Posterior vena cava (tissue), 2 donors: ENCODE measurements at regions of chr1 and their contacts with region 1.

Region 1: GRCh38 chr1:86380257-86380861 is 15.8 kb downstream of the ODF2L start:
- DNase-seq: no peak

Region 2: GRCh38 chr1:86273066-86273465 is 107.3 kb before region 1 on chr1:
- intact Hi-C with region 1: no loop called
- DNase-seq: no peak

Region 3: DNA sequence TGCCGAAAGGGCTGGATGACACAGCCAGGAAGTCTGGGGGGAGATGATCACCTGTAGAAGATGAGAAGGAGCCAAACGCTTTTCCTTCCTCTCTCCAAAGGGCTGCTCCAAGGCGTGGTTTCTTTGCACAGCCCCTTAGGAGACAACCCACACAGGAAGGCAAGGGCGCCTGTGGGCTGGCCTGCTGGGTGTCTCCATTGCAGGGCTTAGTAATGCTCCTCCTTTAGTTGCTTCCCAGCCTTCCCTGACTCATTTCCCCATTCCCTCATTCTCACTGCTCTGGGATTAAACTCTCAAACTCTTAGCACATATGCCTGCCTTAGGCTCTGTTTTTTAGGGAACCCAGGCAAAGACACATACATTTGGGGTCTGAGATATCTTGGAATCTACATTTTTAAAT is 86.6 kb after region 1 on chr1:
- intact Hi-C with region 1: no loop called
- DNase-seq: no peak

Region 4: DNA sequence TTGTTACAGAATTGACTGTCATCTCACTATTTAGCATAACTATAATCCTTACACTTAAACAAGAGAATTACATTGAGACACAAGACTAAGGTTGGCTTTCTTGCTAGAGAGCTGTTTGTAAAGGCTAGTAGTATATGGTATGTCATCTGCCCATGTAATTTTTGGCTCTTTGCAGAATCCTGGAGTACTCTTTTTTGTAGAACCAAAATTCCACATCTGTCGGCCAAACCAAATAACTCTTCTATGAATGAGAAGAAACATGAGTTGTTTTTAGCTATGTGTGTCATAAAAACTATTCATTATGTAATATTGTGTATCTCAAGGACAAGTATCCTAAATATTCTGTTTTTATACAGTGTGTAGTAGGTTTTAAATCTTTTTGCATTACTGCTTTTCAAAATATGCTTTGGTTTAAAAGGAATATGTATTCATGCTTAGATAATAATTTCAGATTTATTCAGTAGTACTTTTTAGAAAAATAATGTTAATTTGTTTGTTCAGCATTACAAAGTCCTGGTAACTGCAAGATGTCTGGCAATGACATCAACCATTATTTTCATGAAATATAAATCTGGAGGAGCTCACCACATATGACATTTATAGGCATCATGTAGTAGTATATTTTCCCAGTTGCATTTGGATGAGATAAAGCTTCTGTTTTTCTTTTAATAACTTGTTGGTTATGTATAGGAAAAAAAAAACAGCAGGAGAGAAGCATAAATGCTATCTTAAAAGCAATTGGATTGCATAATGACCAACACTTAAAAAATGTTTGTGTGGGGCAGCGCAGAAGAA is 693.8 kb after region 1 on chr1:
- intact Hi-C with region 1: loop called in 1 of 2 experiments (anchors 5 kb)
- DNase-seq: no peak

Region 5: DNA sequence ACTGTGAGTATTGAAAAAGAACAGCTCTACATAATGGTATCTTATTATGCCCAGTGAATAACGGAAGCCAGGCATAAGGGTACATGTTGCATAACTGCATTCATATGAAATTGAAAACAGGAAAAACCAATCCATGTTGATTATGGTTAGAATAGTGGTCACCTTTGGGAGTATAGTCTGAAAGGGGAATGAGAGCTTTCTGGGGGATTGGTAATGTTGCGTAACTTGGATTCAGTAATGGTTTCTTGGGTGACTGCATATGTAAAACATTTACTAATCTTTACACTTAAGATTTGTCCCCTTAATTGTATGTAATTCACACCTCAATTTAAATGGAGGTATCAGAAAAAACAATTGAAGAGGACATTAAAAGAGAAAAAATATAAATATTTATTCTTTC is 1240.4 kb after region 1 on chr1:
- intact Hi-C with region 1: loop called in 1 of 2 experiments (anchors 10 kb)
- DNase-seq: no peak